PC-9 (cell line): ENCODE measurements at regions of chr1 and their contacts with region 1.

Region 1: GRCh38 chr1:235648954-235649367 is 623 bp downstream of the GNG4 start:
- DNase-seq: peak; percentile 40 to 65
- H3K4me3 ChIP-seq: peak overlapping the region; percentile 76
- H3K27ac ChIP-seq: no peak overlapping the region
- H3K4me1 ChIP-seq: peaks cover 5% of the 10 kb centered on the region
- H3K27me3 ChIP-seq: no peaks in the 10 kb centered on the region
- CTCF ChIP-seq: no peak

Region 2: GRCh38 chr1:235339746-235340445 is 309.1 kb before region 1 on chr1:
- CTCF ChIA-PET with region 1: no interaction called
- POLR2A ChIA-PET with region 1: no interaction called
- intact Hi-C with region 1: no loop called
- DNase-seq: no peak
- H3K4me3 ChIP-seq: no peak overlapping the region
- H3K27ac ChIP-seq: no peak overlapping the region
- H3K4me1 ChIP-seq: no peaks in the 10 kb centered on the region
- H3K27me3 ChIP-seq: no peaks in the 10 kb centered on the region
- CTCF ChIP-seq: no peak

Region 3: DNA sequence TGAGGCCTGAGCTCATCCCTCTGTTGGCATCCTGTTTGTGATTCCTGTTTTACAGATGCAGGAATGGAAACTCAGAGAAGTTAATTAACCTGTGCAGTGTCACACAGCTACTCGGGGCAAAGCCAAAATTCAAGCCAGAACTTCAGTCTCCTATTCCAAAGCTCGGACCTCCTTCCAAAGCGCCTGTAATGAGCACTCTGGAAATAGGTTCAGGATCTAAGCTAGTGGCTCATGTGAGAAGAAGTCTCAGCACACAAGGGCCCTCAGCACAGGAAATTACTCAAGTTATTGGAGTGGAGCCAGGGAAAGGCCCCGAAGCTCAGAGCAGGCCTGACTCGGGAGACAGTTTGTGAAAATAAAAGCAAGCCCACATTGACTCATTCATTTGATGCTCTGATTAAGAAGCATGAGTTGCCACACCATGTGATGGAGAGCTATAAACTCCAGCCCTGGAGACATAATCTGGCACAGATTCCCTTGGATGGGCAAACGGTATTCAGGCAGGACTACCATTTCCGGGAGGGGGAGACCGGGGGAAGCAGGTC is 268.4 kb after region 1 on chr1:
- CTCF ChIA-PET with region 1: no interaction called
- POLR2A ChIA-PET with region 1: no interaction called
- intact Hi-C with region 1: loop called (anchors 10 kb)
- DNase-seq: peak; percentile 83 to 99
- H3K4me3 ChIP-seq: no peak overlapping the region
- H3K27ac ChIP-seq: peak overlapping the region; percentile 91
- H3K4me1 ChIP-seq: peaks cover 76% of the 10 kb centered on the region
- H3K27me3 ChIP-seq: no peaks in the 10 kb centered on the region
- CTCF ChIP-seq: no peak